Motor neuron (in vitro differentiated cells): ENCODE measurements at regions of chr9 and their contacts with region 1.

Region 1: GRCh38 chr9:36913393-36914211 is 120.5 kb downstream of the PAX5 start:
- ATAC-seq: peak in 1 of 8 experiments; percentile 20
- H3K4me3 ChIP-seq: no peak overlapping the region
- H3K27ac ChIP-seq: no peak overlapping the region
- H3K4me1 ChIP-seq: no peaks in the 10 kb centered on the region

Region 2: DNA sequence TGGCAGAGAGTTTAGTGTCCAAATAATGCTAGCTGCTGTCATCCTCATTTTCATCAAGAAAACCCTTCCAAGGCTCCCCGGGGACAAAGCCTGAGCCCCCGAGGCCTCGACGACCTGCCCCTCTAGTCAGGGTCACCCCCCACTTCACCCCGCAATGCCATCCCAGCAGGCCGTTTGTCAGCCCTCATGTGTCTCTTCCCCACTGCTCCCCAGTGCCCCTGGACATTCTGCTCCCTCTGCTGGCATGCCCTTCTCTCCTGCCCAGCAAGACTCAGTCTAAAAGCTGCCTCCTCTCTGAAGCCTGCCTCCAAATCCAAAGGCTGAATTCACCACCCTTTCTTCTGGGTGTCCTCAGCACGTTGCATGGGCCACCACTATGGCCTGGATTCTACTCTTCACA is 61.1 kb after region 1 on chr9:
- in situ Hi-C with region 1: loop called in 1 of 9 experiments (anchors 10 kb)
- ATAC-seq: no peak
- H3K4me3 ChIP-seq: no peak overlapping the region
- H3K27ac ChIP-seq: no peak overlapping the region
- H3K4me1 ChIP-seq: peaks cover 0 to 5% of the 10 kb centered on the region in 2 donors